CD14-positive monocyte (primary cell): ENCODE measurements at regions of chr14 and their contacts with region 1.

Region 1: DNA sequence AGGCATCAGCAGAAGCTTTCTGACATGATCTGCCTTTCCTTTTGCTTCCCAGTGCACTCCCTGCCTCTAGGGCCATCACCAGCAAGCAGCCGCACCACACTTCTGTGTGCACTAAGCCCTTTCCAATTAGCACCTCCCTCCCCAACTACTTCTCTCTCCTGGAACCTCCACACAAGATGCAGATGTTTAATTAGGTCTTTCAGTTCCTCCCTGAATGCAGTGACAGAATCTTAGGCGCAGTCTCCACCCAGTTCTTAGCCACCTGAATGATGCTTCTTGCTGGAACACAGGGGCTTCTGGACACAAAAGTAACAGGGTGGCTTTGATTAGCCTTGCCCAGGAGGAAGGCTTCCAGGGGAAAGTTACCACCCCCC is 32.9 kb downstream of the NIN start:
- DNase-seq: no peak
- H3K4me3 ChIP-seq: no peak overlapping the region
- H3K4me3 Mint-ChIP-seq: no peak overlapping the region
- H3K27ac ChIP-seq: peak overlapping the region in 1 of 2 donors; percentile 23
- H3K27ac Mint-ChIP-seq: peak overlapping the region in 3 of 7 donors; percentile 52 to 77 (median 59)
- H3K4me1 ChIP-seq: peaks cover 6 to 13% of the 10 kb centered on the region in 2 donors
- H3K4me1 Mint-ChIP-seq: peaks cover 33% of the 10 kb centered on the region
- H3K27me3 ChIP-seq: no peaks in the 10 kb centered on the region
- H3K27me3 Mint-ChIP-seq: no peaks in the 10 kb centered on the region
- CTCF ChIP-seq: no peak

Region 2: GRCh38 chr14:50846226-50846880 is 48.3 kb after region 1 on chr14:
- intact Hi-C with region 1: loop called in 1 of 2 experiments (anchors 10 kb)
- DNase-seq: no peak
- H3K4me3 ChIP-seq: no peak overlapping the region
- H3K4me3 Mint-ChIP-seq: no peak overlapping the region
- H3K27ac ChIP-seq: no peak overlapping the region
- H3K27ac Mint-ChIP-seq: no peak overlapping the region
- H3K4me1 ChIP-seq: no peaks in the 10 kb centered on the region
- H3K4me1 Mint-ChIP-seq: no peaks in the 10 kb centered on the region
- H3K27me3 ChIP-seq: no peaks in the 10 kb centered on the region
- H3K27me3 Mint-ChIP-seq: no peaks in the 10 kb centered on the region
- CTCF ChIP-seq: no peak

Region 3: GRCh38 chr14:50871914-50872732 is 74.1 kb after region 1 on chr14 and contains the start of gene ABHD12B:
- intact Hi-C with region 1: loop called in 1 of 2 experiments (anchors 2 kb)
- DNase-seq: no peak
- H3K4me3 ChIP-seq: peak within 1 kb of the TSS in 1 of 3 experiments; percentile 41
- H3K4me3 Mint-ChIP-seq: peak within 1 kb of the TSS; percentile 39 to 72
- H3K27ac ChIP-seq: no peak within 1 kb of the TSS
- H3K27ac Mint-ChIP-seq: peak within 1 kb of the TSS in 1 of 7 donors; percentile 11
- H3K4me1 ChIP-seq: peaks cover 15 to 22% of the 10 kb centered on the region in 2 donors
- H3K4me1 Mint-ChIP-seq: peaks cover 24% of the 10 kb centered on the region
- H3K27me3 ChIP-seq: peaks cover 18 to 19% of the 10 kb centered on the region in 2 donors
- H3K27me3 Mint-ChIP-seq: peaks cover 21 to 30% (median 22%) of the 10 kb centered on the region in 3 donors
- CTCF ChIP-seq: no peak
- polyA plus RNA-seq, gene ABHD12B: 0.45 to 0.54 TPM in 2 of 3 donors, not detected in the other